Naive thymus-derived CD8-positive, alpha-beta T cell (primary cell): ENCODE measurements at regions of chr19 and their contacts with region 1.

Region 1: DNA sequence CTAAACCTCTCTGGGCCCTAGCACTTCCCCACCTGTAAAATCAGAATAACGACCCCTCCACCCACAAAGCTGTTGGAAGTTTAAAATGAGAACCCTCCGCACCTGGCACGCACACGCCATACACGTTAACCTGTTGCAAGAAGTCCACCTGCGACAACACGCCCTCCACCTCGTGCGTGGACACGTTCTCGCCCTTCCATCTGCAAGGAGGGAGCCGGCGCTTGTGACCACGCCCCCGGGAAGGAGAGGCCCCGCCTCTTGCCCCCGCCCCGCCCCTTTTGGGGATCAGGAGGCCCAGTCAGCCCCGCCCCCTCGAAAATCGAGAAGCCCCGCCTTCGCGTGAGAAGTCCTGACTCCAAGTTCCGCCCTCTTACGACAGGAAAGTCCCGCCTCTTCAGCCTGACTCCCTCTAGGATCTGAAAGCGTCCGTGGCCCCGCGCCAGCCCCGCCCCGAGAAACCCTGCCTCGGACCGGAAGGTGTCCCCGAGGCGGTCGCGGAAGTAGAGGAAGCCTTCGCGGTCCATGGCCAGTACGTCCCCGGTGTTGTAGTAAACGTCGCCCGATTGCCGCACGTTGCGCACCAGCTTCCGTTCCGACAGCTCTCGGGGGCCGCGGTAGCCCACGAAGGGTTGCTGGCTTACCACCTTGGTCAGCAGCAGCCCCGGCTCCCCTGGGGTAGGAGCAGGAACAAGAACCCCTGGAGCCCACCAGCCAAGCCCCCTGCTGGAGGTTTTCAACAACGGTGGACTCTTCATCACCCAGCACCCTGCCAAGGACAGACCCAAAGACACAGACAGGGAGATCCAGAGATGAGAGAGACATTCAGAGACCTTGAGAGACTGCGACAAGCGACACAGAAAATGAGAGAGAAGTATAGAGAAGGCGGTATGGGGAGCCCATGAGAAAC is 12.5 kb downstream of the SLC27A5 start:
- DNase-seq: peak; percentile 82 to 98 (median 90)
- ATAC-seq: peak; percentile 89 to 90
- H3K4me3 Mint-ChIP-seq: peak overlapping the region; percentile 89 to 96 (median 94)
- H3K27ac Mint-ChIP-seq: peak overlapping the region; percentile 86 to 99 (median 96)
- H3K4me1 Mint-ChIP-seq: peaks cover 14 to 30% (median 22%) of the 10 kb centered on the region in 4 donors
- H3K27me3 Mint-ChIP-seq: no peaks in the 10 kb centered on the region

Region 2: GRCh38 chr19:58451358-58452101 is 47.7 kb before region 1 on chr19 and contains the start of gene ZNF324B:
- POLR2A ChIA-PET with region 1: no interaction called
- DNase-seq: peak; percentile 93 to 98 (median 96)
- ATAC-seq: peak; percentile 93 to 96
- H3K4me3 Mint-ChIP-seq: peak within 1 kb of the TSS; percentile 79 to 93 (median 90)
- H3K27ac Mint-ChIP-seq: peak within 1 kb of the TSS; percentile 19 to 93 (median 88)
- H3K4me1 Mint-ChIP-seq: peaks cover 17 to 29% (median 21%) of the 10 kb centered on the region in 4 donors
- H3K27me3 Mint-ChIP-seq: peaks cover 7 to 21% (median 13%) of the 10 kb centered on the region in 5 donors
- polyA plus RNA-seq, gene ZNF324B: 1.4 to 2.6 (median 1.8) TPM

Region 3: GRCh38 chr19:58513694-58514563 is 14.7 kb after region 1 on chr19:
- POLR2A ChIA-PET with region 1: interaction called, 23 read pairs
- DNase-seq: peak; percentile 87 to 98 (median 94)
- ATAC-seq: peak; percentile 93 to 94
- H3K4me3 Mint-ChIP-seq: peak overlapping the region; percentile 74 to 91 (median 81)
- H3K27ac Mint-ChIP-seq: peak overlapping the region; percentile 48 to 97 (median 90)
- H3K4me1 Mint-ChIP-seq: peaks cover 19 to 43% (median 34%) of the 10 kb centered on the region in 4 donors
- H3K27me3 Mint-ChIP-seq: no peaks in the 10 kb centered on the region